K562 (cell line): ENCODE measurements at regions of chr2 and their contacts with region 1.

Region 1: DNA sequence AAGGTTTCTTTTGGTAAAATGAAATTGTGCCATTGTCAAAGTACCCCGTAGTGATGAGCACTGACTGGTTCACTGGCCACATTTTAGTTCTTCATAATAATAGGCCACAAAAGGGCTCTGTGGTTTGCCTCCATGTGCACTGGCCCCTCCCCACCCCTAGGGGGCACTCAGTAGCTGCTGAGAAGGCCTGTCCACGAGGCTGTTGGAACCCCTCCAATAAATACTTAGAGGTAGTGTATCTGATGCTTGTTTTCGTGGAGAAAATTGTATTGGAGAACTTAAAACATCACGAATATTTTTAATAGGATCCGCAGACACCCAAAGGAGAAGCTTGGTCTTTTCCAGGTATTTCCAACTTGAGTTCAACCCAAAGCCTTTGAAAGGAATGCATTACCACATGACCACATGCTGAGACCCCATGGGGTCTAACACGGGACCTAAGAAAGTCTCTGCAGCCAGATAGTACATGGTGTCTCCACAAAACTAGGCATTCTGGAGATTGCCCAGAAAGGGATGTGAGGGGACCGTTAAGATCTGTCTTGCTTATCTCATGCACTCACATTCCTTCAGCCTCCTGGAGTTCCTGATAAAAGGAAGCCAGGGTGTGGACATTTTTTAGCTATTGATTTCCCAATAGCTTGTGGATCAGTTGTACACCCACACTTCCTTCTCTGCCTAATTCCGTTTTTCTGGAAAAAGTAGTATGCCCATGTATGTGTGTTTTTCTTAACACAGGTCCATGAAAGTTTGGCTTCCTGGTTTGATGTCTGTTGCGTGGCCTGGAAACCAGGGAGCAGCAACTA is 28.5 kb upstream of the NOSTRIN start:
- DNase-seq: peak; percentile 84 to 97 (median 90)
- ATAC-seq: peak; percentile 95
- H3K4me3 ChIP-seq: peak overlapping the region; percentile 10; the same call in 1 of the 2 replicates
- H3K27ac ChIP-seq: peak overlapping the region; percentile 89
- H3K4me1 ChIP-seq: peaks cover 2 to 48% of the 10 kb centered on the region in 2 experiments; a peak in 4 of 5 replicates
- H3K27me3 ChIP-seq: no peaks in the 10 kb centered on the region
- CTCF ChIP-seq: peak; percentile 91 to 100 (median 99)
- EP300 ChIP-seq: peak; percentile 100
- POLR2A ChIP-seq: no peak
- RAD21 ChIP-seq: peak; percentile 97 to 99

Region 2: DNA sequence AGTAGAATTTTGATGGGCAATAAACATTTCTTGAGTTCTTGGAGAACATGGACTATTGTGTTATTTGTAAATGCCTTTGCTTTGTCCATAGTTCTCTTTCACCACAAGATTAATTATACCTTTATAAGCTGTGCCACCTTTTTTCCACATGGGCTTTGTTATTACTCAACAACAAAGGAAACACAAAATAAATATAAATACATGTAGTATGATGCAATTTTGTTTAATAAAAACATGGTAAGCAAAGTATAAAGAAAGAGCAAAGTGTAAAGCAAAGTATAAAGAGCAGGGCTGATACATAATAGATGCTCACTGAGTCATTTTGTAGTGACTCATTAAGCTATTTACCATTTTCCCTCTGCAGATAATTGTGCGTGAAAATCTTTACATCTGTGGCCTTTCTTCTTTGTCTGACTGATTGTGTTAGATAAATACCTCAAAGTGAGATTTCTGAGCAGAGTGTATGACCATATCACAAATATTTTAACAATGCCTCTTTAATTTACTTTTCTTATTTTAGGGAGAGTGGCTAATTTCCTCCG is 236.9 kb before region 1 on chr2:
- CTCF ChIA-PET with region 1: no interaction called
- POLR2A ChIA-PET with region 1: no interaction called
- in situ Hi-C with region 1: no loop called
- intact Hi-C with region 1: no loop called
- DNase-seq: no peak
- ATAC-seq: no peak
- H3K4me3 ChIP-seq: no peak overlapping the region
- H3K27ac ChIP-seq: no peak overlapping the region
- H3K4me1 ChIP-seq: no peaks in the 10 kb centered on the region
- H3K27me3 ChIP-seq: no peaks in the 10 kb centered on the region
- CTCF ChIP-seq: no peak
- EP300 ChIP-seq: no peak
- POLR2A ChIP-seq: no peak
- RAD21 ChIP-seq: no peak

Region 3: GRCh38 chr2:168849610-168850009 is 75.7 kb after region 1 on chr2:
- CTCF ChIA-PET with region 1: no interaction called
- POLR2A ChIA-PET with region 1: interaction called, 3 read pairs
- in situ Hi-C with region 1: no loop called
- intact Hi-C with region 1: loop called (anchors 1 kb)
- DNase-seq: peak; percentile 47 to 66 (median 59)
- ATAC-seq: peak; percentile 44
- H3K4me3 ChIP-seq: no peak overlapping the region
- H3K27ac ChIP-seq: no peak overlapping the region
- H3K4me1 ChIP-seq: peaks cover 12 to 37% of the 10 kb centered on the region in 2 experiments
- H3K27me3 ChIP-seq: no peaks in the 10 kb centered on the region; a peak in 1 of 5 replicates
- CTCF ChIP-seq: peak; percentile 44 to 71 (median 52)
- EP300 ChIP-seq: 0 out of 2 replicates have a peak, but pooled peaks have one; percentile 11
- POLR2A ChIP-seq: no peak
- RAD21 ChIP-seq: peak; percentile 51 to 58

Region 4: GRCh38 chr2:168920504-168921157 is 146.7 kb after region 1 on chr2:
- CTCF ChIA-PET with region 1: interaction called, 32 read pairs
- POLR2A ChIA-PET with region 1: no interaction called
- in situ Hi-C with region 1: loop called (anchors 5 kb)
- intact Hi-C with region 1: loop called (anchors 1 kb)
- DNase-seq: peak; percentile 38 to 79 (median 44)
- ATAC-seq: peak; percentile 84
- H3K4me3 ChIP-seq: no peak overlapping the region
- H3K27ac ChIP-seq: no peak overlapping the region
- H3K4me1 ChIP-seq: peaks cover 0 to 7% of the 10 kb centered on the region in 2 experiments; a peak in 1 of 5 replicates
- H3K27me3 ChIP-seq: no peaks in the 10 kb centered on the region
- CTCF ChIP-seq: peak; percentile 63 to 90 (median 67); a peak in 5 of 6 replicates
- EP300 ChIP-seq: no peak
- POLR2A ChIP-seq: no peak
- RAD21 ChIP-seq: peak; percentile 95 to 98

Region 5: GRCh38 chr2:169001116-169001815 is 227.3 kb after region 1 on chr2:
- CTCF ChIA-PET with region 1: no interaction called
- POLR2A ChIA-PET with region 1: no interaction called
- in situ Hi-C with region 1: no loop called
- intact Hi-C with region 1: no loop called
- DNase-seq: no peak
- ATAC-seq: no peak
- H3K4me3 ChIP-seq: no peak overlapping the region
- H3K27ac ChIP-seq: no peak overlapping the region
- H3K4me1 ChIP-seq: peaks cover 0 to 25% of the 10 kb centered on the region in 2 experiments; a peak in 4 of 5 replicates
- H3K27me3 ChIP-seq: no peaks in the 10 kb centered on the region
- CTCF ChIP-seq: no peak
- EP300 ChIP-seq: no peak
- POLR2A ChIP-seq: no peak
- RAD21 ChIP-seq: no peak

Region 6: GRCh38 chr2:169131587-169132512 is 357.9 kb after region 1 on chr2:
- CTCF ChIA-PET with region 1: no interaction called
- POLR2A ChIA-PET with region 1: no interaction called
- in situ Hi-C with region 1: no loop called
- intact Hi-C with region 1: loop called (anchors 10 kb)
- DNase-seq: peak; percentile 58 to 76 (median 70)
- ATAC-seq: peak; percentile 14; the same call in 2 of the 3 replicates
- H3K4me3 ChIP-seq: no peak overlapping the region
- H3K27ac ChIP-seq: no peak overlapping the region
- H3K4me1 ChIP-seq: peaks cover 13 to 41% of the 10 kb centered on the region in 2 experiments
- H3K27me3 ChIP-seq: no peaks in the 10 kb centered on the region
- CTCF ChIP-seq: peak; percentile 51 to 83 (median 76); a peak in 5 of 6 replicates
- EP300 ChIP-seq: no peak
- POLR2A ChIP-seq: no peak
- RAD21 ChIP-seq: peak; percentile 59 to 66